WTC11 (cell line): ENCODE measurements at regions of chr1 and their contacts with region 1.

Region 1: GRCh38 chr1:20574686-20575540 is 14.0 kb upstream of the CDA start:
- DNase-seq: peak; percentile 90
- ATAC-seq: peak; percentile 98
- H3K4me3 Mint-ChIP-seq: no peak overlapping the region
- H3K27ac Mint-ChIP-seq: no peak overlapping the region
- H3K4me1 Mint-ChIP-seq: no peaks in the 10 kb centered on the region
- H3K27me3 Mint-ChIP-seq: peaks cover 38% of the 10 kb centered on the region
- CTCF ChIP-seq: peak; percentile 76

Region 2: DNA sequence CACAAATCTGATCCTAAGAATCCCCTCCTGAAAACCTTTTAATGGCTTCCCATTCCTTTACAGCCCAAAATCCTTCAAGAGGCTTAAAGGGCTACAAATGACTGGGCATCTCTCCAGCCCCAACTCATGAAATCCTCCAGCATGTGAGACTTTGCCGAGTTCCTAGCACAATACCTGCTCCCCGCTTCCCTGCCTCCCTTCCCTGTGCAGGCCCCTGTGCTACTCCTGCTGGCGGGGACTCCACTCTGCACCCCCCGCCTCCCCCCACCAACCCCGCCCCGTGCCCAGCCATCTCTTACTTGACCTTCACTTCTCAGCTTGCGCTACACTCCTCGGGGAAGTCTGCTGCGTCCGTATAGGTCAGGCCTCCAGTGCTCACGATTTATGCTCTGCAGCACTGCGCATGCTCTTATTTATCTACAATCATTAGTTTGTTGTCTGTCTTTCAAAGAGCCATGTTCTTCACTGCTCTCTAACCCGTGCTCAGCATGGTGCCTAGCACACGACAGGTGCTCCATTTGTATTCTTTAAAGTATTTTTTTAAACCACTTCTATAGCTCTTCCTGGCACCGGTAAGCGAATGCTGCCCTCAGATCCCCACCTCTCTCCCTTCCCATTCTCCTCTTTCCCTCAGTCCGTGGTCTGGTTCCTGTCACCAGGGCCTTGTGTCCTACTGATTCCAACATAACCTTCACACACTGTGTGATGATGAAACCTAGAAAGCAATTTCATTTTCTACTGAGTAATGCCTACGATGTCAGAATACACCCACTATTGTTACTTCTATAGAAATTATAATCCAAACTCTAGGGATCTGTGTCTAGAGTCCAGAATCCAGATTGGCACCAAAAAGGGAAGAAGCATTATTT is 351.1 kb before region 1 on chr1:
- CTCF ChIA-PET with region 1: no interaction called
- POLR2A ChIA-PET with region 1: no interaction called
- DNase-seq: peak; percentile 39
- ATAC-seq: peak; percentile 88
- H3K4me3 Mint-ChIP-seq: no peak overlapping the region
- H3K27ac Mint-ChIP-seq: no peak overlapping the region
- H3K4me1 Mint-ChIP-seq: peaks cover 22% of the 10 kb centered on the region
- H3K27me3 Mint-ChIP-seq: peaks cover 43% of the 10 kb centered on the region
- CTCF ChIP-seq: no peak

Region 3: GRCh38 chr1:20521960-20522861 is 52.7 kb before region 1 on chr1:
- CTCF ChIA-PET with region 1: interaction called, 10 read pairs
- POLR2A ChIA-PET with region 1: no interaction called
- DNase-seq: peak; percentile 90
- ATAC-seq: peak; percentile 91
- H3K4me3 Mint-ChIP-seq: peak overlapping the region; percentile 57
- H3K27ac Mint-ChIP-seq: no peak overlapping the region
- H3K4me1 Mint-ChIP-seq: 0 out of 2 replicates have a peak, but pooled peaks cover 4% of the 10 kb centered on the region
- H3K27me3 Mint-ChIP-seq: peaks cover 40% of the 10 kb centered on the region
- CTCF ChIP-seq: peak; percentile 75

Region 4: GRCh38 chr1:20589331-20590278 is 14.7 kb after region 1 on chr1:
- CTCF ChIA-PET with region 1: interaction called, 41 read pairs
- POLR2A ChIA-PET with region 1: no interaction called
- DNase-seq: no peak
- ATAC-seq: peak; percentile 16; the same call in 1 of the 2 replicates
- H3K4me3 Mint-ChIP-seq: peak overlapping the region; percentile 43
- H3K27ac Mint-ChIP-seq: peak overlapping the region; percentile 59; the same call in 1 of the 2 replicates
- H3K4me1 Mint-ChIP-seq: peaks cover 33% of the 10 kb centered on the region
- H3K27me3 Mint-ChIP-seq: peaks cover 2% of the 10 kb centered on the region; the same call in 1 of the 2 replicates
- CTCF ChIP-seq: no peak

Region 5: DNA sequence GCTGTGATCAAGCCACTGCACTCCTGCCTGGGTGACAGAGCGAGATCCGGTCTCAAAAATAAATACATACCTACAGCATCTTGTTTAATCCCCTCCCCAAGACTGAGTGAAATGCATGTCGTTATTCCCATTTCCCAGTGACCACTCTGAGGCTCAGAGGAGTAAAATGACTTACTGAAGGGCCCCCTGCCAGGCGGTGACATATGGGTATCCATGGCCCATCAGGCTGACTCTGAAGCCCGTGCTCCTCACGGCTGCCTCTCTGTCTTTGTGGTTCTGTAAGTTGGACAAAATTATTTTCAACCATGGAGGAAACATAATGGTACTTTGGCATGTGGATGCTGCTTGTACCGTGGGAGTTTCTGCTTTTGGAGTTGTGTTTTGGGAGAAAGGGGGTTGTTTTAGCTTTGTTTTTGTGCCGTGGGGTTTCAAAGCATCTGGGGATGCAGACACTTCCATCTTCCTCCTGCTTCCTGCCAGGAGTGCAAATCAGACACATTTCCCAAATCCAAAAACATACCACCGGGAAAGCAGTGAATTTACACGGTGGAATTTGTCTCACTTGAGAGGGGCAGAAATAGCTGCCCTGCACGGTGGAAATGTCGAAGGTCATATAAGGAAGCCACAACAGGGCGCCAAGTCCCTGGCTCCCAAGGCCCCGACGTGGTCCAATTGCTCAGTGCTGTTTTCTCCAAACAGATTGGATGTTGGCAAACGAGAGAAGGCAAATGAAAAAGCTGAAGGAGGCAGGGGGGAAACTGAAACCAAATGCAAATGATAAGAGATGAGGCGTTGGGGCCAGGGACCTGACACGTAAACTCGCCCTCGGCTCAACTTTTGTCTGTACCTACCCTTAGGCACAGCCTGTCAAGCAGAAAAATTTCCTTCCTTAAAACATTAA is 41.3 kb after region 1 on chr1:
- CTCF ChIA-PET with region 1: interaction called, 14 read pairs
- POLR2A ChIA-PET with region 1: no interaction called
- DNase-seq: no peak
- ATAC-seq: peak; percentile 18; the same call in 1 of the 2 replicates
- H3K4me3 Mint-ChIP-seq: no peak overlapping the region
- H3K27ac Mint-ChIP-seq: peak overlapping the region; percentile 57; the same call in 1 of the 2 replicates
- H3K4me1 Mint-ChIP-seq: peaks cover 30% of the 10 kb centered on the region
- H3K27me3 Mint-ChIP-seq: no peaks in the 10 kb centered on the region
- CTCF ChIP-seq: no peak

Region 6: GRCh38 chr1:20640183-20640597 is 65.3 kb after region 1 on chr1:
- CTCF ChIA-PET with region 1: interaction called, 153 read pairs
- POLR2A ChIA-PET with region 1: no interaction called
- DNase-seq: peak; percentile 64
- ATAC-seq: peak; percentile 59
- H3K4me3 Mint-ChIP-seq: no peak overlapping the region
- H3K27ac Mint-ChIP-seq: peak overlapping the region; percentile 74; the same call in 1 of the 2 replicates
- H3K4me1 Mint-ChIP-seq: peaks cover 16% of the 10 kb centered on the region
- H3K27me3 Mint-ChIP-seq: no peaks in the 10 kb centered on the region; the same call in 1 of the 2 replicates
- CTCF ChIP-seq: peak; percentile 88

Region 7: DNA sequence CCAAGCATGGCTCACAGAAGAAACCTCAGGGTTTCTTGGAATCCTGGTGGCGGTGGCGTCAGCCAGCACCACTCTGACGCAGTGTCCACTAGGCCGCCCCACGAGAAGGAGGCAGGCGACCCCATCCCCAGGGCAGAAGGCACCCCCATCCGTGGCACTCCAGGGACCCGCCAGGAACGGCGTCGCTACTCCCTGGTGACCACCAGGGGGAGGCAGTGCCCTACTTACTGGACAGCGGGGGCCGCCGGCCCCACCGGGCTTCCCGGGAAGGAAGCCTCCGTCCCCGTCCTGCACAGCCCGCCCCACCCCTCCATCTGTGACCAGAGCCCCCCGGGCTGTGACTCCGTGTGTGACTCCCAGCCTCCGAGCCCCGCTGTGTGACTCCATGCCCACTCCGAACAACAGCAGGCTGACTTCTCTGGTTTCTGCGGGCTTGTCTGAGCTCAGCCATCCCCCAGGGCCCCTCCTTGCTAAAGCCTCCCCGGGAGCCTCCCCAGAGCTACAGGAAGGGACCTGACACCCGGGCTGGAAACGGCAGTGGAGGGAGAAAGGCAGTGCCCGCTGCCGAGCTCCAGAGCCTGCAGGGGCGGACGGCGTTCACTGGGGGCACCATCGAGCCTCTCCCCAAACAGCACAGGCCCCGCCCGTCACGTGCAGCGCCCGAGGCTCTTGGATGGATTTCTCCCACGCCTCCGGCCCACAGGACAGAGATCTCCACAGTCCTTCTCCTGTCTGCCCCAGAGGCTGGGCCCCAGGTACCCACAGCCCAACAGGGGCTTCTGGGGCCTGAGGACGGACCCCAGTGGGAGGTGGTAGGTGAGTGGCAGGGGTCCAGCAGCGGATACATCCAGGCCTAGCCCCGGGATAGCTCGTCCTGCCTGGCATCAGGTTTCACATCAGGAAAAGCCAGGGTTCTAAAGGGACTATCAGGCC is 121.8 kb after region 1 on chr1:
- CTCF ChIA-PET with region 1: interaction called, 14 read pairs
- POLR2A ChIA-PET with region 1: no interaction called
- DNase-seq: peak; percentile 87
- ATAC-seq: peak; percentile 89
- H3K4me3 Mint-ChIP-seq: peak overlapping the region; percentile 79
- H3K27ac Mint-ChIP-seq: peak overlapping the region; percentile 77; the same call in 1 of the 2 replicates
- H3K4me1 Mint-ChIP-seq: peaks cover 11% of the 10 kb centered on the region
- H3K27me3 Mint-ChIP-seq: peaks cover 2% of the 10 kb centered on the region
- CTCF ChIP-seq: peak; percentile 97